ENCODE measurements at regions of chr15 and their contacts with region 1.

Region 1: DNA sequence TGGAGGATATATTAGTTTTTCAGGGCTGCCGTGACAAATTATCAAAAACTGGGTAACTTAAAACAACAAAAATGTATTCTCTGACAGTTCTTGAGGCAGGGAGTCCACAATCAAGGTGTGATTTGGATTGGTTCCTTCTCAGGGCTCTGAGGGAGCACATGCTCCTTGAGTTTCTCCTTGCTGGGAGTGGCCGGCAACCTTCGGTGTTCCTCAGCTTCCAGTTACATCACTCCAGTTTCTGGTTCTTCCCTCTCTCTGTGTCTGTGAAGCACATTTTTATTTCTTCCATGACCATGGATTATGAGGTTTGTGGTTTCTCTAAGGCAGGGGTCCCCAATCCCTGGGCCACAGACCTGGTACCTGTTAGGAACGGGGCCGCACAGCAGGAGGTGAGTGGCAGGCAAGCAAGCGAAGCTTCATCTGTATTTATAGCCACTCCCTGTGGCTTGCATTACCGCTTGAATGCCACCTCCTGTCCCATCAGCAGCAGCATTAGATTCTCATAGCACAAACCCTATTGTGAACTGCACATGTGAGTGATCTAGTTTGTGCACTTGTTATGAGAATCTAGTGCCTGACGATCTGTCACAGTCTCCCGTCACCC is 24.3 kb downstream of the LRRC28 start:
- DNase-seq: no peak
- H3K4me3 Mint-ChIP-seq: no peak overlapping the region
- H3K27ac Mint-ChIP-seq: no peak overlapping the region
- H3K4me1 Mint-ChIP-seq: no peaks in the 10 kb centered on the region
- H3K27me3 Mint-ChIP-seq: no peaks in the 10 kb centered on the region
- CTCF ChIP-seq: no peak

Region 2: GRCh38 chr15:98983333-98983732 is 292.3 kb before region 1 on chr15:
- CTCF ChIA-PET with region 1: no interaction called
- POLR2A ChIA-PET with region 1: no interaction called
- intact Hi-C with region 1: no loop called
- DNase-seq: peak; percentile 91
- H3K4me3 Mint-ChIP-seq: no peak overlapping the region
- H3K27ac Mint-ChIP-seq: no peak overlapping the region
- H3K4me1 Mint-ChIP-seq: peaks cover 7% of the 10 kb centered on the region
- H3K27me3 Mint-ChIP-seq: no peaks in the 10 kb centered on the region
- CTCF ChIP-seq: no peak

Region 3: DNA sequence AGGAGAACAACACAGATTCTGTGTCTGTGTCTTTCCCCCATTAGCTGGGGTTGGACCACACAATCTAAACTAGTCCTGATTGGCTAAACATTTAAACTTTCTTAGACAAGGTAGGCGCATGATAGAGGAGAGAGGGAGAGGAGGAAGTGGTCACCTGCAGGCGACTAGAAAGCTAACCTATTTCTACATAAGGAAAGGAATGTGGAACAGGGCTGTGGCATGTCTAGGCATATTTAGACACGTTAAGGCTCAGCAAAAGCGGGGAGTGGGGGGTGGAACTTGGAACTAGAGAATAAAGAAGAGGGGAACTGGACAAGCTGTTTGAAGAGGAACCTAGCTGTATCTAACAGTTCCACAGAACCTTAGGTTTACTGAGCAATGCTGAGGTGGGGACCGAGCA is 11.5 kb before region 1 on chr15:
- CTCF ChIA-PET with region 1: interaction called, 25 read pairs
- POLR2A ChIA-PET with region 1: interaction called, 3 read pairs
- intact Hi-C with region 1: no loop called
- DNase-seq: peak; percentile 72
- H3K4me3 Mint-ChIP-seq: no peak overlapping the region
- H3K27ac Mint-ChIP-seq: peak overlapping the region; percentile 65
- H3K4me1 Mint-ChIP-seq: peaks cover 16% of the 10 kb centered on the region
- H3K27me3 Mint-ChIP-seq: no peaks in the 10 kb centered on the region
- CTCF ChIP-seq: no peak

Region 4: GRCh38 chr15:99371180-99372103 is 95.8 kb after region 1 on chr15:
- CTCF ChIA-PET with region 1: interaction called, 34 read pairs
- POLR2A ChIA-PET with region 1: no interaction called
- intact Hi-C with region 1: no loop called
- DNase-seq: peak; percentile 11
- H3K4me3 Mint-ChIP-seq: no peak overlapping the region
- H3K27ac Mint-ChIP-seq: peak overlapping the region; percentile 90
- H3K4me1 Mint-ChIP-seq: peaks cover 8% of the 10 kb centered on the region
- H3K27me3 Mint-ChIP-seq: no peaks in the 10 kb centered on the region
- CTCF ChIP-seq: peak; percentile 24

Region 5: GRCh38 chr15:99928429-99928981 is 652.9 kb after region 1 on chr15:
- CTCF ChIA-PET with region 1: interaction called, 3 read pairs
- POLR2A ChIA-PET with region 1: no interaction called
- intact Hi-C with region 1: loop called (anchors 5 kb)
- DNase-seq: peak; percentile 70
- H3K4me3 Mint-ChIP-seq: peak overlapping the region; percentile 70
- H3K27ac Mint-ChIP-seq: no peak overlapping the region
- H3K4me1 Mint-ChIP-seq: peaks cover 24% of the 10 kb centered on the region
- H3K27me3 Mint-ChIP-seq: peaks cover 7% of the 10 kb centered on the region
- CTCF ChIP-seq: peak; percentile 71

Region 6: GRCh38 chr15:100572362-100572983 is 1296.8 kb after region 1 on chr15:
- CTCF ChIA-PET with region 1: no interaction called
- POLR2A ChIA-PET with region 1: no interaction called
- intact Hi-C with region 1: loop called (anchors 5 kb)
- DNase-seq: peak; percentile 11
- H3K4me3 Mint-ChIP-seq: no peak overlapping the region
- H3K27ac Mint-ChIP-seq: no peak overlapping the region
- H3K4me1 Mint-ChIP-seq: no peaks in the 10 kb centered on the region
- H3K27me3 Mint-ChIP-seq: no peaks in the 10 kb centered on the region
- CTCF ChIP-seq: peak; percentile 41

Measured in MCF 10A (cell line).